Breast epithelium (tissue), 4 donors: ENCODE measurements at regions of chr6 and their contacts with region 1.

Region 1: DNA sequence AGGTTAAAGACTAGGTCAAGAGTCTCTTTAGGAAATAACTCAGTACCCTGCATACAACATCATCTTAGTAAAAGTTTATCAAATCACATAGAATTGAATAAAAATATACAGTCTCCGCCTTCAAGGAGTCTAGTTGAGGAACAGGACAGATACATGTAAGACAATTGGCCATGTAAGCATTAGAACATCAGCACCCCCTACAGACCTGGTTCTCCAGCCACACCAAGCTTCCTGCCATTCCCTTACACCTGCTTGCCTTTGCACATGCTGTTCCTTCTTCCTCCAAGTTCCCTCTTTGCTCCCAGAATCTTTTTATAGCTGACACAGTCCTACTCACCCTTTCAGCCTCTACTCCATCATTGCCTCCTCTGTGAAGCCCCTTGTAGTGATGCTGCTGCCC is 187.8 kb upstream of the LRFN2 start:
- DNase-seq: no peak
- H3K4me3 ChIP-seq: no peak overlapping the region
- H3K27ac ChIP-seq: no peak overlapping the region
- H3K4me1 ChIP-seq: no peaks in the 10 kb centered on the region
- H3K27me3 ChIP-seq: peaks cover 0 to 7% of the 10 kb centered on the region in 2 donors
- CTCF ChIP-seq: no peak
- POLR2A ChIP-seq: no peak

Region 2: DNA sequence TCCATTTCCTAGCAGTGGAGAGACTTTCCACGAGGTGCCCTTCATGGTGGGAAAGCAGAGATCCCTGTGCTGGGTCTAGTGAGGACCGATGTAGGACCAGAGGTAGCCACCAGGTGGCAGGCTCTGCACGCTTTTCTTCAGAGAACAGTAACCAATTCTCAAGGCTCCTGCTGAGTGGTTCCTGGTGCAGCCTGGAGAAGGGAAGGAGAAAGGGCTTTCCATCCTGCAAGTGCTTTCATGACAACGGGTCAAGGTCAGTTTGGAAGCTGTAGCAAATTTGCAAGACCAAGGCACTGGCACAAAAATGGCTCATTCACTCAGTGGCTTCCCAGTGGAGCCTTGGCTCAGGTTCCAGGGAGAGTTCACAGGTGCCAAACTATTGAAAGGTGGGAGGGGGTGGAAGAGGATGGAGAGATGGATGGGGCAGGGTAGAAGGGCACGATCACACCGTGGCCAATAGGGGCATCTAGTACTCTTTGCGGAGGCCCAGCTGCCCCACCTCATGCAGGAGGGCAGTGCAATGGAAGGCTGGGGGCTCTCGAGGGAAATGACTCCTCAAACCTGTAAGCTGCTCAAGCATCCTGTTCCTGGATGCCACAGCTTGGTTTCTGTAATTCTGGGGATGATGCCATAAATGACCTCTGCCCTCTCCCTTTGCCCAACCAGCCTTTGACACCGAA is 1426.9 kb before region 1 on chr6:
- intact Hi-C with region 1: loop called (anchors 5 kb)
- DNase-seq: peak; percentile 28 to 69
- H3K4me3 ChIP-seq: no peak overlapping the region
- H3K27ac ChIP-seq: no peak overlapping the region
- H3K4me1 ChIP-seq: no peaks in the 10 kb centered on the region
- H3K27me3 ChIP-seq: no peaks in the 10 kb centered on the region
- CTCF ChIP-seq: peak; percentile 61 to 85 (median 71)
- POLR2A ChIP-seq: no peak

Region 3: DNA sequence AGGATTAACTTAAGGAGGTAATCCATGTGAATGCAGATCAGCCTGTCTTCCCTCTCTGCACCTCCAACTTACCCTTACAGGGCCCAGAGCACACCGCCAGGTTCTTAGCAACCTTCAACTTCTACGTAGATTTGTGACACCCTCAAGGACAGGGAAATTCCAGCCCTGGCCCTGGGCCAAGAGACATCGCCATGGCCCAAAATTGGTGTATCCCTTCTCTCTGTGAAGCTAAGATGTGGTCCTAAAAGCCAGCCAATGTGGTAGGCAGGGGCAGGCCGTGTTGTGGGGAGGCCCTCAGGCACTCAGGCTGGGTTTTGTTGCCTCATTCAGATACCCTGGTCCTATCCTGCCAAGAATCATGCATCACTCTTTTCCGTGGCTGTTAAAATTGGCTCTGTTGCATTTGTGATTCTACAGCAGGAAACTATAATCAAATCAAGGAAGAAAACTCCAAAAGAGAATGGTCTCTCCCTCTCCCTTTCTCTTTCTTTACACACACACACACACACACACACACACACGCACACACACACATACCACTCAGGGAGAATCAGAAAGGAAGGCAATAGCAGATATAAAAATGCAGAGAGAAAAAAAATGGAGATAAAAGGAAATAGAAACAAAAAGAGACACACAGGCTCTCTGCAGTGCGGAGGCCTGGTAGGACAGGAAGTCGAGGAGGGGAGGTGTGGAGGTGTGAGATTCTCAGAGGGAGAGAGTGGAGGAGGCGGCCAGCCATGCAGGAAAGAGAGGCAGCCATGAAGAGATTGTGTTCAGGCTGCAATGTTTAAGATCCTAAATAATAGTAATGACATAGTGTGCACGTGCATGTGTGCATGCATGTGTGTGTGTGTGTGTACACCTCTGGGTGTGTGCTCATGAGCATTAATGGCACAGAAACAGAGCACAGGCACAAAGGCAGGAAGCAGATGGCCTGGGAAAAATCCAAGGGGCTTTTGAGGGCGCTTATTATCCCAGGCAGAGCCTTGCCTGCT is 14.0 kb after region 1 on chr6:
- intact Hi-C with region 1: no loop called
- DNase-seq: no peak
- H3K4me3 ChIP-seq: no peak overlapping the region
- H3K27ac ChIP-seq: peak overlapping the region; percentile 15 to 25
- H3K4me1 ChIP-seq: no peaks in the 10 kb centered on the region
- H3K27me3 ChIP-seq: no peaks in the 10 kb centered on the region
- CTCF ChIP-seq: no peak
- POLR2A ChIP-seq: no peak